Endothelial cell of umbilical vein (primary cell): ENCODE measurements at regions of chr19 and their contacts with region 1.

Region 1: GRCh38 chr19:39412100-39412866 is at the start of gene PLEKHG2:
- DNase-seq: peak; percentile 100
- H3K4me3 ChIP-seq: peak within 1 kb of the TSS; percentile 74 to 94 (median 83)
- H3K27ac ChIP-seq: peak within 1 kb of the TSS; percentile 87
- H3K4me1 ChIP-seq: peaks cover 40% of the 10 kb centered on the region
- H3K27me3 ChIP-seq: no peaks in the 10 kb centered on the region
- CTCF ChIP-seq: peak; percentile 88 to 91
- POLR2A ChIP-seq: peak; percentile 65
- total RNA-seq, gene PLEKHG2: 74.1 TPM in 2 replicates

Region 2: DNA sequence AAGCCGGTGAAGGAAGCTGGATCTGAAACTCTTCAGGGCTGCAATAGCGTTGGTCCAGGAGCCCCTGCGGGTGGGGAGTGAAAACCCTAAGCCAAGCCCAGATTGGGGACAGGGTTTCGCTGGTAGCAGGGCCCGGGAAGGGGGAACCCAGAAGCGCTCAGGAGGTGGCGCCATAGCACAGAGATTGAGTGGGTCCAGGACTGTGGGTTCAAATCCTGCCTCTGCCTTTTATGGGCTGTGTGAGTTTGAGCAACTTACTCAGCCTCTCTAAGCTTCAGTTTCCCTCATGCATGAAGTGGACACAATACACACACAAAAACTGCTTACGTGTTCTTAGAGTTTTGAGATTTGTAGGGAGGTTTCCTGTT is 199.9 kb before region 1 on chr19:
- CTCF ChIA-PET with region 1: no interaction called
- POLR2A ChIA-PET with region 1: no interaction called
- dilution Hi-C with region 1: no loop called
- intact Hi-C with region 1: loop called (anchors 1 kb)
- DNase-seq: no peak
- H3K4me3 ChIP-seq: no peak overlapping the region
- H3K27ac ChIP-seq: no peak overlapping the region
- H3K4me1 ChIP-seq: no peaks in the 10 kb centered on the region
- H3K27me3 ChIP-seq: peaks cover 0 to 2% of the 10 kb centered on the region in 2 experiments
- CTCF ChIP-seq: peak in 1 of 2 donors; percentile 18
- POLR2A ChIP-seq: no peak

Region 3: GRCh38 chr19:39372047-39372802 is 40.1 kb before region 1 on chr19:
- CTCF ChIA-PET with region 1: interaction called, 3 read pairs
- POLR2A ChIA-PET with region 1: no interaction called
- dilution Hi-C with region 1: no loop called
- intact Hi-C with region 1: loop called (anchors 1 kb)
- DNase-seq: peak; percentile 75
- H3K4me3 ChIP-seq: no peak overlapping the region
- H3K27ac ChIP-seq: peak overlapping the region; percentile 85
- H3K4me1 ChIP-seq: peaks cover 18% of the 10 kb centered on the region
- H3K27me3 ChIP-seq: no peaks in the 10 kb centered on the region
- CTCF ChIP-seq: no peak
- POLR2A ChIP-seq: peak; percentile 24

Region 4: GRCh38 chr19:39397360-39398296 is 14.7 kb before region 1 on chr19:
- CTCF ChIA-PET with region 1: interaction called, 147 read pairs
- POLR2A ChIA-PET with region 1: interaction called, 10 read pairs
- dilution Hi-C with region 1: no loop called
- intact Hi-C with region 1: loop called (anchors 1 kb)
- DNase-seq: peak; percentile 79
- H3K4me3 ChIP-seq: no peak overlapping the region
- H3K27ac ChIP-seq: peak overlapping the region; percentile 30
- H3K4me1 ChIP-seq: peaks cover 8% of the 10 kb centered on the region
- H3K27me3 ChIP-seq: no peaks in the 10 kb centered on the region
- CTCF ChIP-seq: peak; percentile 96 to 99
- POLR2A ChIP-seq: no peak

Region 5: GRCh38 chr19:39435499-39436349 is 23.4 kb after region 1 on chr19 and contains the start of gene RPS16:
- CTCF ChIA-PET with region 1: interaction called, 13 read pairs
- POLR2A ChIA-PET with region 1: interaction called, 18 read pairs
- dilution Hi-C with region 1: no loop called
- intact Hi-C with region 1: loop called (anchors 1 kb)
- DNase-seq: peak; percentile 98
- H3K4me3 ChIP-seq: peak within 1 kb of the TSS; percentile 96
- H3K27ac ChIP-seq: peak within 1 kb of the TSS; percentile 96
- H3K4me1 ChIP-seq: peaks cover 26% of the 10 kb centered on the region
- H3K27me3 ChIP-seq: no peaks in the 10 kb centered on the region
- CTCF ChIP-seq: no peak
- POLR2A ChIP-seq: peak; percentile 96
- total RNA-seq, gene RPS16: 1,735 and 1,768 TPM in 2 replicates